Ovary (tissue), 10 donors: ENCODE measurements at regions of chr3 and their contacts with region 1.

Region 1: DNA sequence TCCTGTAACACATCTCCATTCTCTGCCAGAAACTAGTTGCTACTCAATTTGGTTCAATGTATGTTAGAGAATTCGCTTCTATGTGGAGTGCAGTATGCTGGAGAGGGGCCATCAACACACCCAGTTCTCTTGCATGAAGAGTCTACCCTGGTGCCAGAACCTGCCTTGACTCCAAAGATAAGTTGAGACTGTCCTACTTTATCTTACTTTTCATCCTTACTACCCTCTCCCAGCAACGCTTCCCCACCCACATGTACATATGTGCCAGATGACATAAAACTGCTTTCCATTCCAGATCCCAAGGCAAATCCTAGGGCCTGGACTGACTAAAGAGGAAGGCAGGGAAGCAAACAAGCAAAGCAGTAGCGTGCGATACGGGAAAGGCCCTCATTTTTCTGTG is 442.6 kb upstream of the THRB start:
- DNase-seq: no peak
- H3K4me3 ChIP-seq: no peak overlapping the region
- H3K27ac ChIP-seq: no peak overlapping the region
- H3K4me1 ChIP-seq: no peaks in the 10 kb centered on the region
- H3K27me3 ChIP-seq: no peaks in the 10 kb centered on the region
- CTCF ChIP-seq: no peak
- EP300 ChIP-seq: no peak
- POLR2A ChIP-seq: no peak

Region 2: DNA sequence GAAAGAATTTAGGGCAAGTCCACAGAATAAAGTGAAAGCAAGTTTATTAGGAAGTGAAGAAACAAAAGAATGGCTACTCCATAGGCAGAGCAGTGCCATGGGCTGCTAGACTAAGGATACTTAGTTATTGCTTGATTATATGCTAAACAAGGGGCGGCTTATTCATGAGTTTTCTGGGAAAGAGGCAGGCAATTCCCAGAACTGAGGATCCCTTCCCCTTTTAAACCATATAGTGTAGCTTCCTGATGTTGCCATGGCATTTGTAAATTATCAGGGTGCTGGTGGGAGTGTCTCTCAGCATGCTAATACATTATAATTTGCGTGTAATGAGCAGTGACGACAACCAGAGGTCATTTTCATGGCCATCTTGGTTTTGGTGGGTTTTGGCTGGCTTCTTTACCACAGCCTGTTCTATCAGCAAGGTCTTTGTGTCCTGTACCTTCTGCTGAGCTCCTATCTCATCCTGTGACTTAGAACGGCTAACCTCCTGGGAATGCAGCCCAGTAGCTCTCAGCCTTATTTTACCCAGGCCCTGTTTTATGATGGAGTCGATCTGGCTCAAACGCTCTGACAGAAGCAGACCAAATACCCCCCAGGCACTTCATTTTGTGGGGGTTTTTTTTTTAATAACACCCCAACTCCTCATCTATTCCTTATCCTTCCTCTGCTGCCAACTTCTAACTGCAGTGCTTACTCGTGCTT is 387.9 kb after region 1 on chr3:
- intact Hi-C with region 1: loop called in 1 of 4 experiments (anchors 5 kb)
- DNase-seq: no peak
- H3K4me3 ChIP-seq: no peak overlapping the region
- H3K27ac ChIP-seq: no peak overlapping the region
- H3K4me1 ChIP-seq: no peaks in the 10 kb centered on the region
- H3K27me3 ChIP-seq: no peaks in the 10 kb centered on the region
- CTCF ChIP-seq: no peak
- EP300 ChIP-seq: no peak
- POLR2A ChIP-seq: no peak